Heart right ventricle (tissue), 16 donors: ENCODE measurements at regions of chr10 and their contacts with region 1.

Region 1: GRCh38 chr10:119028900-119029612 is 458 bp upstream of the NANOS1 start:
- DNase-seq: peak; percentile 92
- ATAC-seq: peak; percentile 79 to 91 (median 82)
- H3K4me3 ChIP-seq: peak overlapping the region; percentile 2 to 66 (median 57)
- H3K27ac ChIP-seq: peak overlapping the region; percentile 19 to 82 (median 70)
- H3K4me1 ChIP-seq: peaks cover 5 to 50% (median 30%) of the 10 kb centered on the region in 9 donors
- H3K27me3 ChIP-seq: peaks cover 0 to 7% (median 0%) of the 10 kb centered on the region in 7 donors
- CTCF ChIP-seq: peak in 6 of 9 donors; percentile 21 to 53 (median 34)

Region 2: GRCh38 chr10:118754720-118755480 is 274.2 kb before region 1 on chr10 and contains the start of gene CACUL1:
- intact Hi-C with region 1: loop called in 4 of 10 experiments (anchors 5 kb)
- DNase-seq: peak; percentile 100
- ATAC-seq: peak; percentile 99 to 100 (median 99)
- H3K4me3 ChIP-seq: peak within 1 kb of the TSS; percentile 84 to 100 (median 95)
- H3K27ac ChIP-seq: peak within 1 kb of the TSS; percentile 51 to 96 (median 86)
- H3K4me1 ChIP-seq: peaks cover 0 to 50% (median 31%) of the 10 kb centered on the region in 9 donors
- H3K27me3 ChIP-seq: no peaks in the 10 kb centered on the region
- CTCF ChIP-seq: no peak
- total RNA-seq, gene CACUL1: 19.5 to 32.6 (median 25.2) TPM

Region 3: GRCh38 chr10:118958984-118959916 is 69.8 kb before region 1 on chr10:
- intact Hi-C with region 1: loop called in 1 of 10 experiments (anchors 2 kb)
- DNase-seq: peak; percentile 53 to 68
- ATAC-seq: peak; percentile 81 to 95 (median 90)
- H3K4me3 ChIP-seq: no peak overlapping the region
- H3K27ac ChIP-seq: peak overlapping the region in 7 of 10 donors; percentile 28 to 61 (median 52)
- H3K4me1 ChIP-seq: peaks cover 0 to 46% (median 23%) of the 10 kb centered on the region in 9 donors
- H3K27me3 ChIP-seq: no peaks in the 10 kb centered on the region
- CTCF ChIP-seq: no peak

Region 4: DNA sequence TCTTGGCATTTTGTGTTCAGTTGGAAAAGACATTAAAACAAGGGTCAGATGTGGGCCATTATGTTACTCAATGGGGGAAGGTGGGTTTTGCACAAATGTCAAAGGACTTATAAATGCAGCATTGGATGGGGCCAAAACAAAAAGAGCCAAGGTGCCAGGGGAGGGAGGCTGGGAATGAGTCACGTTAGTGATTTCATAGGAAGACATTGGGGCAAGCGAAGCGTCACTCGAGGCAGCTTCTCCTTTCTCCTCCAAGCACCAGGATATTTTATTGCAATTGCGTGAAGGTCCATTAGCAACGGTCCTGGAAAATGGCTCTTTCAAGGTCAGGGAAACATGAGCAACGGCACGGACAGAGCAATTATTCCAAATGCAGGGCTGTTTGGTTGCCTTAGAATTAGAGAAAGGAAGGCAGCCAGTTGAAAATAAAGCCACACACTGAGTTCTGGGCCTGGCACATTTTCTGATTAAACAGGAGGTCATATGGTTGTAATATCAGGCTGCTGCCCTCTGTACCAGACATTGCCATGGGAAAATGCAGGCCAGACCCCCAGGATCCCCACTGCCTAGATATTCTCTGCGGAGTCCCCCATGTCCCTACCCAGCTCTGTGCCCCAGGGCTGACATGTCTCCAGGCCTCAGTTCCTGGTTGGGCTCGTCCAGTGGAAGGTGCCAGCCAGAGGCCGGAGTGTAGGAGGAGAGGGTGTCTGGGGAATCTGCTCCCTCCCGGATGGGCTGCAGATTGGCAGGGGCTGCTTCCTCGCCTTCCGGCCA is 62.8 kb before region 1 on chr10:
- intact Hi-C with region 1: loop called in 3 of 10 experiments (anchors 5 kb)
- DNase-seq: peak; percentile 21 to 41
- ATAC-seq: peak; percentile 54 to 85 (median 72)
- H3K4me3 ChIP-seq: no peak overlapping the region
- H3K27ac ChIP-seq: peak overlapping the region in 8 of 10 donors; percentile 31 to 74 (median 56)
- H3K4me1 ChIP-seq: peaks cover 0 to 35% (median 6%) of the 10 kb centered on the region in 9 donors
- H3K27me3 ChIP-seq: no peaks in the 10 kb centered on the region
- CTCF ChIP-seq: no peak

Region 5: GRCh38 chr10:119070395-119071165 is 41.5 kb after region 1 on chr10:
- intact Hi-C with region 1: loop called in 2 of 10 experiments (anchors 5 kb)
- DNase-seq: no peak
- ATAC-seq: no peak
- H3K4me3 ChIP-seq: no peak overlapping the region
- H3K27ac ChIP-seq: no peak overlapping the region
- H3K4me1 ChIP-seq: peaks cover 0 to 22% (median 10%) of the 10 kb centered on the region in 9 donors
- H3K27me3 ChIP-seq: no peaks in the 10 kb centered on the region
- CTCF ChIP-seq: no peak

Region 6: DNA sequence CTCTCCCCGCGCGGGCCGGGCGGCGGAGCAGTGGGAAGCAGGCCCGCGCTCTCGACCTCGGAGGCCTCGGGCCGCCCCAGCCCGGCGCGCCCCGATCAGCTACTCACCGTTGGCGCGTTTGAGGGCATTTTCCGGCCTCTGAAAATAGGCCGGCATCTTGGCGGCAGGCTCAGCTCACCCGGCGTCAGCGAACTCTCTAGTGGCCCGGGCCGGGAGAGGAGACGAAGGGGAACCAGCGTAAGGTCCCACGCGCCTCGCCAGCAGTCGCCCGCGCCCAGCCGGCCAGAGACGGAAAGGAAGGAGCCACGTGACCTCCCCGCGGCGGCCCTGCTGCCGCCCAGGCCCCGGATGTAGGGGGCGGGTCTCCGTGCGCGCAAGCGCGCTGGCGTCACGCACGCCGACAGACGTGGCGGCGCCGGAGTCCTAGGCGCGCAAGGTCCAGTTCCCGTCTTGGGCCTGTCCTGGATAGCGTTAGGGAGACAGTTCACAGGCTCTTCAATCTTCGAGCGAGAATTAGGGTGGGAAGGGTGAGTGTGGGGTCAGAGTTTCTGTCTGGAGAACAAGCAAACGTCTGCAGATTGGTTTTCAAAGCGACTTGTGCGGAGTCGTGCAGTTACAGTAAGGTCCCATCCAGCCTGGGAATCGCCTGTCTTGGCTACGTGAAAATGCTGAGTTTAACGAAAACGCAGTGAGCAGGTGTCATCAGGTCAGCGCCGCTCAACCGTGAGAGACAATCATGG is 51.6 kb after region 1 on chr10 and contains the start of gene EIF3A:
- intact Hi-C with region 1: loop called in 1 of 10 experiments (anchors 5 kb)
- DNase-seq: peak; percentile 92 to 95
- ATAC-seq: peak; percentile 97 to 98 (median 98)
- H3K4me3 ChIP-seq: peak within 1 kb of the TSS; percentile 66 to 99 (median 95)
- H3K27ac ChIP-seq: peak within 1 kb of the TSS; percentile 91 to 99 (median 98)
- H3K4me1 ChIP-seq: peaks cover 5 to 52% (median 37%) of the 10 kb centered on the region in 9 donors
- H3K27me3 ChIP-seq: no peaks in the 10 kb centered on the region
- CTCF ChIP-seq: no peak
- total RNA-seq, gene EIF3A: 94.8 to 139 (median 126) TPM